ENCODE measurements at regions of chr3 and their contacts with region 1.

Region 1: GRCh38 chr3:4633078-4634004 is 140.2 kb downstream of the ITPR1 start:
- DNase-seq: no peak
- H3K4me3 ChIP-seq: no peak overlapping the region
- H3K27ac ChIP-seq: peak overlapping the region; percentile 49 to 74 (median 56)
- H3K4me1 ChIP-seq: peaks cover 29 to 46% of the 10 kb centered on the region in 2 donors
- H3K27me3 ChIP-seq: no peaks in the 10 kb centered on the region
- CTCF ChIP-seq: peak; percentile 72 to 94 (median 85)
- POLR2A ChIP-seq: no peak

Region 2: GRCh38 chr3:4343258-4343657 is 290.1 kb before region 1 on chr3:
- intact Hi-C with region 1: no loop called
- DNase-seq: no peak
- H3K4me3 ChIP-seq: no peak overlapping the region
- H3K27ac ChIP-seq: no peak overlapping the region
- H3K4me1 ChIP-seq: peaks cover 0 to 10% of the 10 kb centered on the region in 2 donors
- H3K27me3 ChIP-seq: no peaks in the 10 kb centered on the region
- CTCF ChIP-seq: no peak
- POLR2A ChIP-seq: no peak

Region 3: DNA sequence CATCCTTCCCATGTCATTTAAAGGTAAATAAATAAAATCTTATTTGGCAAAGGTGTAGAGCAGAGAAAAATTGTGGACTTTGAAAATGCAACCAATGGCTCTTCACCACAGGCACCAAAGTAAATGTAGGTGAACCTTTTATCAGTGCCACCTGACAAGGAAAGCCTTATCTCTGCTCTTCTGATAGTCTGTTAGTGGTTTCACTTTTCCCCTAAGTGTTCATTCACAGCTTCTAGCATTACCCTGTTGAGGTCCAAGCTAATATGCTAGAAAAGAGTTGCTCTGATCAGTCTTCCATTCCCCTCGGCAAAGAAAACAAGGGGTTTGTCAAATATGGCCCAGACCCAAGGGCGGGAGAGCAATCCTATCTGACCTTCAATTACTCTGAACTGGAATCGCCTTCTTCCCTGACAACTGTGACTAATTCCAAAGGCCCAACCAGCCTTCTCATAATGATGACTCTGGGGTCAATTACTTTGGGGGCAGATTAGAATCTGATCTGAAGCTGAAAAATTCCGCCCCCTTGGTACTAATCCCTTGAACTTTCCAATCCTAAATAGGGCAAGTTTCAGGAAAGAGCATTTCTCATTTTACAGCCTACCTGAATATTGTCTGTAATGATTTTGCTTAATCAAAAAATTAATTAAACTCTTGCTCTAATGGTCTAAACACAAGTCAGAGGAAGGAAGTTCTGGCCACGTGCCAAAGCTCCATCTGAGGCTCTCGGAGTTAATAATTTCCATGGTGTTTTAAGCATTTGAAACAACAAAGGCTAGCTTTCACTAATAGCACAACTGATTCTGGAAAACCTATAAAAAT is 277.7 kb before region 1 on chr3:
- intact Hi-C with region 1: loop called (anchors 5 kb)
- DNase-seq: peak; percentile 59 to 63
- H3K4me3 ChIP-seq: no peak overlapping the region
- H3K27ac ChIP-seq: peak overlapping the region; percentile 19 to 75 (median 58)
- H3K4me1 ChIP-seq: peaks cover 14 to 45% of the 10 kb centered on the region in 2 donors
- H3K27me3 ChIP-seq: no peaks in the 10 kb centered on the region
- CTCF ChIP-seq: no peak
- POLR2A ChIP-seq: no peak

Region 4: DNA sequence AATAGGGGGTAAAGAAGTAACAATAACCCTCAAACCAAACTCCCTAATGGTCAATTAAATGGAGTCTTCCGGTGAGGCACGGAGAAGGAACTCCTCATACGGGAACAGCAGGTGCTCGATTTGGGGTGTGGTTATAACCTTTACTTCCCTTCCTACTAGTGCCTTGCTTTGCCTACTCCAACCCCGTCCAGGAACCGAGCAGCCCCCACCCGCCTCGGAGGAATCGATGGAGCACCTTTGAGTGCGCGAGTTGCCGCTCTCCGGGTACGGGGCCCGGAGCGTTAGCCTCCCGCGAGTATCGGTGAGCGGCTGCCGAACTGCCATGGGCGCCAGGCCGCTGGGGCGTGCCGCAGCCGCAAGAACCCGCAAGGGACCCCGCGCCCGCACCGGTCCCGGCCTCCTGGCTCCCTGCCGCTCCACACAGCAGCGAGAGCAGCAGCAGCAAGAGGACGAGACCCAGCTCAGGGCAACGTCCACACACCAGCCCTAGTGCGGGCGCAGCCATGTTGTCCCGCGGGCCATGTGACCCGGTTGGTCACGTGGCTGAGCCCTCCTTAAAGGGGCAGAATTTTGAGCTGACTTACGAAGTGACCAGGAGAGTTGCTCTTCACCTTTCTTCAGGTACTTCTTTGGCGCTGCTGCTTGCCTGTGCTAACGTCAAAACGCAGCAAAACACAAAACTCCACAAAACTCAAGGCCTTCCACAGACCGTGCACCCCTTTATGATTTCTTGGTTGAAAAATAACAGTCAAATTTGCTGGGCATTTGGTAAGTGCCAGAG is 166.4 kb before region 1 on chr3 and contains the start of gene SUMF1:
- intact Hi-C with region 1: loop called (anchors 10 kb)
- DNase-seq: peak; percentile 84 to 87
- H3K4me3 ChIP-seq: peak within 1 kb of the TSS; percentile 62 to 93 (median 86)
- H3K27ac ChIP-seq: peak within 1 kb of the TSS; percentile 57 to 90 (median 57)
- H3K4me1 ChIP-seq: peaks cover 4 to 15% of the 10 kb centered on the region in 2 donors
- H3K27me3 ChIP-seq: no peaks in the 10 kb centered on the region
- CTCF ChIP-seq: peak in 1 of 6 experiments; percentile 2
- POLR2A ChIP-seq: peak in 1 of 2 donors; percentile 56
- total RNA-seq, gene SUMF1: 58.8 to 98.3 (median 74.5) TPM

Region 5: DNA sequence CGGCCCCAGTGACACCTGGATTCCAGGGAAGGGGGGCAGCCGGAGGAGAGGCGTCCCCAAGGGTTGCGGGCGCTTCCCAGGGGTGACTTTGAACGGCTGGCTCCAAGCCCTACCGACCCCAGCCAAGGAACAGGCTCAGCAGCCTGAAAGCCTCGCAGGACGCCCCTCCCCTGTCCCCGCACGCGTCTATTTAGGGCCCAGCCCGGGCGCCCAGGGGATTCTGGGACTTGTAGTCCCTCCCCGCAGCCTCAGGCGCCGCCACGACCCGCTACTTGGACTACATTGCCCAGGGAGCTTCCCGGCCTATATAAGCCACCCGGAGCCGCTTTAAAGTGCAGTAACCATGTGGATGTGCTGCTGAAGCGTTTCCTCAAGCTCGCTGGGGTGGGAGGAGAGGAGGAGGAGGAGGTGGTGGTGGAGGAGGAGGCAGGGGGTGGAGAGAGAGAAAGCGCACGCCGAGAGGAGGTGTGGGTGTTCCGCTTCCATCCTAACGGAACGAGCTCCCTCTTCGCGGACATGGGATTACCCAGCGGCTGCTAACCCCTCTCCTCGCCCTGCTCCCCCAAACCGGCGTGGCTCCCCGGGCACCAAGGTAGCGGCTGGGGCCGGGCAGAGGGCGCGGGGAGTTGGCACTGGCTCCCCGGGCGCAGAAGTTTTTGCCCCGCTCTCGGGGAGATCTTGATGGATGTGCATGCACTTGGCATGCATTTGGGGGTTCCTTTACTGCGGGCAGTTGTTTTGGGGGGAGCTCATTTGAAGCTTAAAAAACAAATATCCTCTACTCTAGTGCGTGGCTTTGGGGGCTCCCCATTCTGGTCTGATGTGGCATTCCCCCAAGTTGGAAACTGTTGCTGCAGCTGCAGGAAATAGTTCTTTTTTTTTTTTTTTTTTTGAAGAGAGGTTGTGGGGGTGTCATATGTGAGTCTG is 140.1 kb before region 1 on chr3 and contains the start of gene ITPR1:
- intact Hi-C with region 1: loop called (anchors 5 kb)
- DNase-seq: peak; percentile 99
- H3K4me3 ChIP-seq: peak within 1 kb of the TSS; percentile 33 to 74 (median 57)
- H3K27ac ChIP-seq: peak within 1 kb of the TSS; percentile 72 to 87 (median 84)
- H3K4me1 ChIP-seq: peaks cover 12 to 17% of the 10 kb centered on the region in 2 donors
- H3K27me3 ChIP-seq: no peaks in the 10 kb centered on the region
- CTCF ChIP-seq: peak in 1 of 6 experiments; percentile 22
- POLR2A ChIP-seq: peak; percentile 96 to 100
- total RNA-seq, gene ITPR1: 210 to 261 (median 232) TPM

Measured in thyroid gland (tissue), 4 donors.